ENCODE measurements at regions of chr12 and their contacts with region 1.

Region 1: DNA sequence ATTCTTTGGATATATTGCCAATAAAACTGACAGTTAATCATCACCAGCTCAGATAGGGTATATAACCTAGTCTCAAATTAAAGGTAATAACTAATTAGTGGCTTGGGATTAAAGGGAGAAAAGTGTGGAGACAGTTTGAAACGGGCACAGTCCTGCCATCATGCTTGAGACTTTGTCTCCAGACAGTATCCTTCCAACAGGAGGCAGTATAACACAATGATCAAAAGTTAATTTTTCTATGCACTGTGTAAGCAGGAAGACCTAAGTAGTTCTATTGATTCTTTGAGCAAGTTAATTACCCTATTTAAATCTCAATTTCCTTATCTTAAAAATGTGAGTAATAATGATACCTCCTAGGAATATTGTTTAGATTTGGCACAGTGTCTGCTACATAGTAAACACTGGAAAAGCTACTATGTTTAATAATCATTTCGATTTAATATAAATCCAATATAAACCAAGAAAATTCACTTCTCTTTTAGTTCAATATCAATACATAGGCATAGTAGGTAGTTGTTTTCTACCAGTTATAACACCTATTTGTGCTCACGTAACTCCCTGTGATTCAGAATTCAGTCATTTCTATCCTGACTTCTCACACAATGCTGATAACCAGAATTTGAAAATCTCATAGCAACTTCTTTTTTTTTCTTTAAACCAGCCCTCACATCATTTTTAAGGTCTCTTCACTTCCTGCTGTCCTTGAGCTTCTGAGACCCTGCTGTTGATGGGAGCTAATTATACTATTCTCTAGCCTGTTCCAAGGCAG is 53.7 kb downstream of the GALNT4 start:
- DNase-seq: no peak
- H3K4me3 Mint-ChIP-seq: no peak overlapping the region
- H3K27ac Mint-ChIP-seq: no peak overlapping the region
- H3K4me1 Mint-ChIP-seq: peaks cover 44% of the 10 kb centered on the region
- H3K27me3 Mint-ChIP-seq: no peaks in the 10 kb centered on the region

Region 2: DNA sequence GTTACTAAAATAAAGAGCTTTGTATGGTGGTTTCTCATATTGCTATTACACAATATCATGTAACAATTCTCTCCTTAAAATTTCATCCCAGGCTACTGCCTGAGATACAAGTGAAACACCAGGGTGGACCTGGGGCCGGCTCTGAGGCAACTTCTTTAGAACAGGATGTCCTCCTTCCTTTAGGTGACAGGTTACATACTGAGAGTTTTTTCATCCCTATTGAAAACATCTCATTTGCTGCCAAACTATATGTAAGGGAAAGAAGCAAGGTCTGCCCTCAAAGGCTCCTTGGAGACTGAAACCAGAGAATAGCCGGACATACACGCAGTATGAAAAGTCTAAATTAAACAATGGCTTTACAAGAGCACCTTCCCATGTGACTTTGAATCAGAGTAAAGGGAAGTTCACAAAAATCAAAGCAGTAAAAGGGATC is 258.6 kb before region 1 on chr12:
- CTCF ChIA-PET with region 1: no interaction called
- intact Hi-C with region 1: no loop called
- DNase-seq: no peak
- H3K4me3 Mint-ChIP-seq: no peak overlapping the region
- H3K27ac Mint-ChIP-seq: no peak overlapping the region
- H3K4me1 Mint-ChIP-seq: peaks cover 13% of the 10 kb centered on the region
- H3K27me3 Mint-ChIP-seq: no peaks in the 10 kb centered on the region

Region 3: GRCh38 chr12:89524541-89525285 is 53.8 kb after region 1 on chr12 and contains the start of gene GALNT4:
- CTCF ChIA-PET with region 1: interaction called, 67 read pairs
- intact Hi-C with region 1: loop called (anchors 1 kb)
- DNase-seq: peak; percentile 80
- H3K4me3 Mint-ChIP-seq: peak within 1 kb of the TSS; percentile 94
- H3K27ac Mint-ChIP-seq: peak within 1 kb of the TSS; percentile 93
- H3K4me1 Mint-ChIP-seq: peaks cover 41% of the 10 kb centered on the region
- H3K27me3 Mint-ChIP-seq: no peaks in the 10 kb centered on the region
- total RNA-seq, gene GALNT4: 2.9 to 3.4 TPM

Region 4: GRCh38 chr12:89529738-89530137 is 58.8 kb after region 1 on chr12:
- CTCF ChIA-PET with region 1: interaction called, 67 read pairs
- intact Hi-C with region 1: loop called (anchors 1 kb)
- DNase-seq: no peak
- H3K4me3 Mint-ChIP-seq: no peak overlapping the region
- H3K27ac Mint-ChIP-seq: no peak overlapping the region
- H3K4me1 Mint-ChIP-seq: peaks cover 9% of the 10 kb centered on the region
- H3K27me3 Mint-ChIP-seq: no peaks in the 10 kb centered on the region

Region 5: GRCh38 chr12:89597770-89598169 is 126.8 kb after region 1 on chr12:
- CTCF ChIA-PET with region 1: no interaction called
- intact Hi-C with region 1: loop called (anchors 5 kb)
- DNase-seq: no peak
- H3K4me3 Mint-ChIP-seq: no peak overlapping the region
- H3K27ac Mint-ChIP-seq: peak overlapping the region; percentile 66
- H3K4me1 Mint-ChIP-seq: peaks cover 23% of the 10 kb centered on the region
- H3K27me3 Mint-ChIP-seq: no peaks in the 10 kb centered on the region

Measured in activated naive CD4-positive, alpha-beta T cell treated with anti-CD3 and anti-CD28 coated beads for 36 hours (primary cell).